ENCODE measurements at regions of chrX and their contacts with region 1.

Region 1: GRCh38 chrX:130975947-130976346 is 72.9 kb upstream of the ENOX2 start:
- DNase-seq: peak in 4 of 9 experiments; percentile 7 to 41 (median 19)
- ATAC-seq: no peak
- H3K4me3 ChIP-seq: no peak overlapping the region
- H3K4me3 Mint-ChIP-seq: no peak overlapping the region
- H3K27ac ChIP-seq: no peak overlapping the region
- H3K27ac Mint-ChIP-seq: no peak overlapping the region
- H3K4me1 ChIP-seq: no peaks in the 10 kb centered on the region
- H3K4me1 Mint-ChIP-seq: no peaks in the 10 kb centered on the region
- H3K27me3 ChIP-seq: no peaks in the 10 kb centered on the region
- H3K27me3 Mint-ChIP-seq: peaks cover 4% of the 10 kb centered on the region
- CTCF ChIP-seq: peak; percentile 46

Region 2: DNA sequence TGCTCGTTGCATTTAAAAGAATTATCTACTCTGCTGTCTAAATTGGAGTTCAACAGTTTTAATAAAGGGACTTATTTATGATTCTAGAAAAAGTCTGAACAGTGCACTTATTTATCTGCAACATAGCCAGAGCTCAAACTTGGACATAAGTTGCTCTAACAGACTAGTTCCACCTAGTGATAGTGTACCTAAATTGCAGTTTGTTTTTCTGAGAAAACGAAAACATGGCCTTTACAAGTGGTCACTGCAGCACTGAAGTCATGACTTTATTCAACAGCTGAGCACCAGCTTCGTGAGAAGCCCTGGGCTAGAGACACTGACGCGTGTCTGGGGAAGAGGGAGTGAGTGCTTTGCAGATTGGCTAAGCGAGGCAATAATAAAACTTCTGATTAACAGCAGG is 390.5 kb after region 1 on chrX:
- CTCF ChIA-PET with region 1: no interaction called
- POLR2A ChIA-PET with region 1: no interaction called
- intact Hi-C with region 1: no loop called
- DNase-seq: no peak
- ATAC-seq: no peak
- H3K4me3 ChIP-seq: no peak overlapping the region
- H3K4me3 Mint-ChIP-seq: no peak overlapping the region
- H3K27ac ChIP-seq: no peak overlapping the region
- H3K27ac Mint-ChIP-seq: no peak overlapping the region
- H3K4me1 ChIP-seq: no peaks in the 10 kb centered on the region
- H3K4me1 Mint-ChIP-seq: no peaks in the 10 kb centered on the region
- H3K27me3 ChIP-seq: no peaks in the 10 kb centered on the region
- H3K27me3 Mint-ChIP-seq: peaks cover 3% of the 10 kb centered on the region
- CTCF ChIP-seq: no peak

Region 3: GRCh38 chrX:131633285-131633917 is 657.5 kb after region 1 on chrX:
- CTCF ChIA-PET with region 1: no interaction called
- POLR2A ChIA-PET with region 1: no interaction called
- intact Hi-C with region 1: loop called in 1 of 2 experiments (anchors 5 kb)
- DNase-seq: peak in 8 of 9 experiments; percentile 0 to 58 (median 31)
- ATAC-seq: no peak
- H3K4me3 ChIP-seq: no peak overlapping the region
- H3K4me3 Mint-ChIP-seq: no peak overlapping the region
- H3K27ac ChIP-seq: no peak overlapping the region
- H3K27ac Mint-ChIP-seq: no peak overlapping the region
- H3K4me1 ChIP-seq: no peaks in the 10 kb centered on the region
- H3K4me1 Mint-ChIP-seq: no peaks in the 10 kb centered on the region
- H3K27me3 ChIP-seq: no peaks in the 10 kb centered on the region
- H3K27me3 Mint-ChIP-seq: no peaks in the 10 kb centered on the region
- CTCF ChIP-seq: peak; percentile 34

Region 4: DNA sequence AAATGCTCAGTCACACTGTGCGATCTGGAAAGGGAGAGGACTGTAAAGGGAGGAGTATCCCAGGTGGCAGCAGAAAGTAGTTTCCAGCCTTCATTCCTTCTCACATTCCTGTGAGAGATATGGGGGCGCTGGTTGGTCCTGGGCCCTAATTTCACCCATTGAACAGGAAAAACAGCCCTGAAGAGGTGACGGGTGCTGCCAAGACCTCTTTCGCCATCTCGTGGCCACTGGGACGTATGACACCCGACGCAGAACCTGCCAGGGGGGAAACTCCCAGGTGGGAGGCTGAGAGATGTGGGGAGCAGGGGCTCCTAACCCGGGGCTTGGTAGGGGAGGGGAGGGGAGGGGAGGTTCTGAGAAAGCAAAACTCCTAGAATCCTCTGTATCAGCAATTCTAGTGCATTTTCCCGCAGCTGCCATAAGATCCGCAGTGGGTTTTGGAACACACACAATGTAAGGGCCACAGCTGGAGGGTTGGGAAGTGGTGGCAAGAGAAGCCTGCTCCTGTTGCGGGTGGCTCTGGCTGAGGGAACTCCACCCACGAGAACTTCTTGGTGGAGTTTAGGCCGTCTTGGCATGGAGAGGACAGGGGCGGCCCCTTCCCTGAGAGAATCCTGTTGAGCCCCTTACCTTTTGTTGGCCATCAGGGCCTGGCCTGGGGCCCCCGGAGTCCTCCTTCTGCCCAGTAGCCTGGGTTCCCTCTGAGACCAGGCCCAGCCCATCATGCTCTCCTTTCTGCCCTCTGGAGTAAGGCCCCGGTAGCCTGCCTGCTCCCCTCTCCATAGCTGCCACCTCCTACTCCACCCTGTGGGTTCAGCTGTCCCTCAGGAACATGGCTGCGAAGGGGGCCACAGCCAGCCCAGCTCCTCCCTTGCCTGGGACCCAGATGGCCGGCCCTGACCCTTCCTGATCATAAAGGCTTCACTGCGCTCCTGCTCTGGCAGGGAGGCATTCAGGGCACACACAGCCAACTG is 702.0 kb after region 1 on chrX:
- CTCF ChIA-PET with region 1: no interaction called
- POLR2A ChIA-PET with region 1: no interaction called
- intact Hi-C with region 1: loop called in 1 of 2 experiments (anchors 5 kb)
- DNase-seq: peak in 7 of 9 experiments; percentile 0 to 61 (median 44)
- ATAC-seq: peak; percentile 42
- H3K4me3 ChIP-seq: no peak overlapping the region
- H3K4me3 Mint-ChIP-seq: no peak overlapping the region
- H3K27ac ChIP-seq: no peak overlapping the region
- H3K27ac Mint-ChIP-seq: no peak overlapping the region
- H3K4me1 ChIP-seq: no peaks in the 10 kb centered on the region
- H3K4me1 Mint-ChIP-seq: no peaks in the 10 kb centered on the region
- H3K27me3 ChIP-seq: no peaks in the 10 kb centered on the region
- H3K27me3 Mint-ChIP-seq: no peaks in the 10 kb centered on the region
- CTCF ChIP-seq: no peak

Region 5: DNA sequence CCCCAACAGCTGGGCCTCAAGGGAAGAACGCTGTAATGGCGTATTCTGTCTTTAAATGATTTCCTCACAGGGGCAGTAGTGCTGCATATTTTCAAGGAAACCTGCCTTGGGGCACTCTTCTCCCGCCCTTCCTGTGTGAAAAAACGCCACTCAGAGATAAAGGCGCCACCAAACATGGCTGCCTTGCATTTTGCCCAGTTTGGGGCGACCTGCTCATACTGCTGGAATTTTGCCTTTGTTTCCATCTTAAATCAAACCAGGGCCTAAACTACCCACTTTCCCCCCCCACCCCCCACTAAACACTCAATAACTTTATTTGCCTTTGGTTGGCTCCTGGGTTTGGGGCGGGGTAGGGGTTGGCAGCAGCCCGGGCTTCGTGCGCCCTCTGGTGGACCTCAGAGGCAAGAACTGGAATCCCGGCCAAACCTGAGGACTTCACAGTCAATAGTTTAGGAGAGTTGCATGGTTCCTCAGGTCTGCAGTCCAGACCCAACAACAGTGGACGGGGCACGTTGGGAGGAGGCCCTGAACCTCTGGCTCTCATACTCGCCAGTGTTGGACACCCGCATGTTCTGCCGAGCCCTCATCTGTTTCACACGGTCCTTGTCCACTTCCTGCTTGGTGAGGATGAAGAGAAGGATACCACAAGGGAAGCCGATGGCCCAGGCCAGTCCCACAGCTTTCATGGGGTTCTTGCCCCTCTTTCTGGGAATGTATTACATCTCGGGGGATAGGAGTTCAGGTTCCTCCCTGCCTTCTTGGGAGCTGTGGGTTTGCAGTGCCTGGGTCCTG is 827.1 kb after region 1 on chrX:
- CTCF ChIA-PET with region 1: no interaction called
- POLR2A ChIA-PET with region 1: no interaction called
- intact Hi-C with region 1: loop called in 1 of 2 experiments (anchors 5 kb)
- DNase-seq: peak in 5 of 9 experiments; percentile 26 to 82 (median 31)
- ATAC-seq: no peak
- H3K4me3 ChIP-seq: no peak overlapping the region
- H3K4me3 Mint-ChIP-seq: no peak overlapping the region
- H3K27ac ChIP-seq: no peak overlapping the region
- H3K27ac Mint-ChIP-seq: no peak overlapping the region
- H3K4me1 ChIP-seq: no peaks in the 10 kb centered on the region
- H3K4me1 Mint-ChIP-seq: no peaks in the 10 kb centered on the region
- H3K27me3 ChIP-seq: no peaks in the 10 kb centered on the region
- H3K27me3 Mint-ChIP-seq: no peaks in the 10 kb centered on the region
- CTCF ChIP-seq: no peak